ENCODE measurements at regions of chr7 and their contacts with region 1.

Region 1: DNA sequence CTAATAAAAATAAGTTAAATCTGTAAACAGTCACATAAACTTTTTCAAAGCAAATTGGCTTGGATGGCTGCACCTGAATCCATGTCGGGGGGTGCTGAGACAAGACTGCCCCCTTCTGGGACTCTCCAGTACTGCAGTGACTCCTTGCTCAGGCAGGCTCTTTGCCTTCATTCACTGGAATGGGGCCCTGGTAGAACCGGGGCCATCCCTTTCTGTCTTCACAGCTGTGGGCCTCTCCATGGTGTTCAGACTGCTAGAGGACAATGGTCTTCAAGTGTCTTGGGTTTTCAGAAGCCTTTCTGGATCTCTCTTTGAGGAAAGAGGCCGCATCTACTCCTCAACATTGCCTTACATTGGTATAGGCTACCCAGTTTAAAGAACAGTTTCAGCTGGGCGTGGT is 16.1 kb upstream of the IMPDH1 start:
- DNase-seq: peak; percentile 84
- H3K4me3 ChIP-seq: no peak overlapping the region
- H3K27ac ChIP-seq: no peak overlapping the region
- H3K4me1 ChIP-seq: peaks cover 0 to 3% (median 1%) of the 10 kb centered on the region in 4 donors
- H3K27me3 ChIP-seq: no peaks in the 10 kb centered on the region
- CTCF ChIP-seq: peak; percentile 92 to 97 (median 94)
- EP300 ChIP-seq: no peak
- POLR2A ChIP-seq: no peak

Region 2: GRCh38 chr7:128398016-128398840 is 27.6 kb before region 1 on chr7:
- in situ Hi-C with region 1: no loop called
- intact Hi-C with region 1: loop called (anchors 1 kb)
- DNase-seq: peak; percentile 69
- H3K4me3 ChIP-seq: no peak overlapping the region
- H3K27ac ChIP-seq: no peak overlapping the region
- H3K4me1 ChIP-seq: no peaks in the 10 kb centered on the region
- H3K27me3 ChIP-seq: no peaks in the 10 kb centered on the region
- CTCF ChIP-seq: peak; percentile 91 to 95 (median 93)
- EP300 ChIP-seq: no peak
- POLR2A ChIP-seq: no peak

Region 3: DNA sequence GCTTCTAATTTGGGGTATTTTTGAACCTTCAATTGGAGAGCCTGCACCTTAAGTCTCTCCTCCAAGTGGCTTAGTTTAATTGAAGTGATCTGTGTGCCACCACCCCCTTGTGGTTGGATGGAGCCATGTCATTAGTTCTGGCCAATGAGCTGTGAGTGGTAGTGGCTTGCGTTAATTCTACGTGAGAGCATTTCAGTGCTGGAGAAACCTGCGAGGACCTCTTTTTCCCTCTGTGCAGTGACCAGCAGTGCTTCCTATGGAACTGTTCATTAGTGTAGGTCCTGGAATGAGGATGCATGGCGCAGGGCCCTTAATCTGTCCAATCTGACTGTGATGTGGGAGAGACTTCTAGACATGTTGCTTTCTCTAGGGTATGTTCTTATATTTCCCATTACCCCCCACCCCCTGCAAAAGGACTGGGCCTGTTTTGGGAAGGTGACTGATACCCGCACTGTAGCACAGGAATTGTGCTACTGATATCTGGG is 33.6 kb after region 1 on chr7:
- in situ Hi-C with region 1: loop called in 2 of 4 experiments (anchors 5 kb)
- intact Hi-C with region 1: loop called (anchors 1 kb)
- DNase-seq: peak; percentile 77
- H3K4me3 ChIP-seq: no peak overlapping the region
- H3K27ac ChIP-seq: peak overlapping the region in 1 of 4 donors; percentile 20
- H3K4me1 ChIP-seq: peaks cover 5 to 36% (median 31%) of the 10 kb centered on the region in 4 donors
- H3K27me3 ChIP-seq: no peaks in the 10 kb centered on the region
- CTCF ChIP-seq: peak; percentile 78 to 91 (median 83)
- EP300 ChIP-seq: no peak
- POLR2A ChIP-seq: no peak